GM12878 (cell line): ENCODE measurements at regions of chr9 and their contacts with region 1.

Region 1: GRCh38 chr9:10059044-10059443 is 553.8 kb downstream of the PTPRD start:
- DNase-seq: no peak
- ATAC-seq: no peak
- H3K4me3 ChIP-seq: no peak overlapping the region
- H3K27ac ChIP-seq: no peak overlapping the region
- H3K4me1 ChIP-seq: no peaks in the 10 kb centered on the region
- H3K27me3 ChIP-seq: no peaks in the 10 kb centered on the region
- CTCF ChIP-seq: no peak
- EP300 ChIP-seq: no peak
- POLR2A ChIP-seq: no peak
- RAD21 ChIP-seq: no peak

Region 2: GRCh38 chr9:10071579-10071978 is 12.5 kb after region 1 on chr9:
- CTCF ChIA-PET with region 1: interaction called, 15 read pairs
- POLR2A ChIA-PET with region 1: no interaction called
- RAD21 ChIA-PET with region 1: no interaction called
- SMC1A ChIA-PET with region 1: interaction called, 3 read pairs
- in situ Hi-C with region 1: no loop called
- intact Hi-C with region 1: no loop called
- DNase-seq: no peak
- ATAC-seq: no peak
- H3K4me3 ChIP-seq: no peak overlapping the region
- H3K27ac ChIP-seq: no peak overlapping the region
- H3K4me1 ChIP-seq: no peaks in the 10 kb centered on the region
- H3K27me3 ChIP-seq: no peaks in the 10 kb centered on the region
- CTCF ChIP-seq: no peak
- EP300 ChIP-seq: no peak
- POLR2A ChIP-seq: no peak
- RAD21 ChIP-seq: no peak

Region 3: DNA sequence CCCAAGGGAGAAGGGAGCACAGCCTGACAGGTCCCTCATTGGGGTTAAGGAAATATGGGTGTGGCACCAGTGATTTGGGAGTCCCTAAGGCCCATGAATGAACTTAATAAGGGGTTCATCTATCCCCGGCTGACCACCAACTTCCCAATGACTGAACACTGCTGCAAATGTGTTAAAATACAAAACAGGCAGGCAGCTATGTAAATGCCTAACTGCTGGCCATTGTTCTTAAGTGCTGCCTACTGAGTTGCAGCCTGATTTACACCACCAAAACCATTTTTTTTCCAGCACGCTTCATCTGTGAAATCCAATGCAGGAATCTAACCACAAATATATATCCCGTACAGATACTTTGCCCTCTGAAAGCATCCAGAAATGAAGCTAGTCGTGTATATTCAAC is 75.2 kb after region 1 on chr9:
- CTCF ChIA-PET with region 1: no interaction called
- POLR2A ChIA-PET with region 1: no interaction called
- RAD21 ChIA-PET with region 1: no interaction called
- SMC1A ChIA-PET with region 1: no interaction called
- in situ Hi-C with region 1: no loop called
- intact Hi-C with region 1: no loop called
- DNase-seq: no peak
- ATAC-seq: no peak
- H3K4me3 ChIP-seq: no peak overlapping the region
- H3K27ac ChIP-seq: no peak overlapping the region
- H3K4me1 ChIP-seq: no peaks in the 10 kb centered on the region
- H3K27me3 ChIP-seq: no peaks in the 10 kb centered on the region
- CTCF ChIP-seq: no peak
- EP300 ChIP-seq: no peak
- POLR2A ChIP-seq: no peak
- RAD21 ChIP-seq: no peak

Region 4: GRCh38 chr9:10148796-10149195 is 89.8 kb after region 1 on chr9:
- CTCF ChIA-PET with region 1: no interaction called
- POLR2A ChIA-PET with region 1: no interaction called
- RAD21 ChIA-PET with region 1: no interaction called
- SMC1A ChIA-PET with region 1: no interaction called
- in situ Hi-C with region 1: no loop called
- intact Hi-C with region 1: no loop called
- DNase-seq: no peak
- ATAC-seq: no peak
- H3K4me3 ChIP-seq: no peak overlapping the region
- H3K27ac ChIP-seq: no peak overlapping the region
- H3K4me1 ChIP-seq: no peaks in the 10 kb centered on the region
- H3K27me3 ChIP-seq: no peaks in the 10 kb centered on the region
- CTCF ChIP-seq: no peak
- EP300 ChIP-seq: no peak
- POLR2A ChIP-seq: no peak
- RAD21 ChIP-seq: no peak

Region 5: DNA sequence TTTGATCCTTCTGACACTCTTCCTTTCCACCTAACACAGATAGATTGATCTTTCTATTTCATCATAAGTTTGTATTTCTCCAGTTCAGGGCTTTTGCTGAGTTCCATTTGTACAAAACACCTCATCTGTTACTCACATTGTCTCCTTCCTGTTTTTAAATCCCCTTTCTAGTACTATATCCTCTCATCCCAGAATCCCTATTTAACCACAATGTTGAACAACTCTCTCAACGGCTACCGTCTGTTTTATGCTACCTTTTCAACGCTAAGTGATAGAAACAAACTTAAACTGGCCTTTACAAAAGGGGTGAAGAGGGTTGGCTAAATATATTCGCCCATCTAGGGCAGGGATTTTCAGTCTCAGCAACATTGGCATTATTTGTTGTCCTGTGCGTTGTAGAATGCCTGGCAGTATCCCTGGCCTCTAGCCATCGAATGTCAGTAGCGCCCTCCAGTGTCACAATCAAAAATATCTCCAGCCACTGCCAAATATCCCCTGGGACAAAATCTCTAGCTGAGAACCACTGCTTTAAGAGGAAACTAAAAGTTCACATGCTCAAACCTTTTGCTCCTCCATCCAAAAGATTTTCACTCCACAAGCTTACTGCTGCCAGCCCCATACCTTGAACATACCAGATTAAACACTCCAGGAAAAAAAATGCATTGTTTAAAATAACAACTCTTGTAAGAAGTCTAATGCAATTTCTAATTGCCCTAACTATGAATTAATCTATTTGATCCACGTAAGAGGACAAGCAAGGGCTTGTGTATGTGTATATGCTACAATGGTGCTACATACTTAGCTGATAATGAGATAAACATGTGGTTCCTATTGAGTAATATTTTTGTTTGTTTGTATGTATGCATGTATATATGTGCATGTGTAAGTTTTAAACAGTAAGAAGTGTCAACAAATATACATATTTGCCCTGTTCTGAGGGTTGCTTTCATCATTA is 209.8 kb after region 1 on chr9:
- CTCF ChIA-PET with region 1: interaction called, 30 read pairs
- POLR2A ChIA-PET with region 1: no interaction called
- RAD21 ChIA-PET with region 1: interaction called, 5 read pairs
- SMC1A ChIA-PET with region 1: interaction called, 9 read pairs
- in situ Hi-C with region 1: no loop called
- intact Hi-C with region 1: loop called (anchors 2 kb)
- DNase-seq: no peak
- ATAC-seq: peak; percentile 77
- H3K4me3 ChIP-seq: no peak overlapping the region
- H3K27ac ChIP-seq: no peak overlapping the region
- H3K4me1 ChIP-seq: no peaks in the 10 kb centered on the region
- H3K27me3 ChIP-seq: no peaks in the 10 kb centered on the region
- CTCF ChIP-seq: peak; percentile 20 to 57 (median 50); a peak in 3 of 6 replicates
- EP300 ChIP-seq: no peak
- POLR2A ChIP-seq: no peak
- RAD21 ChIP-seq: peak; percentile 34; the same call in 1 of the 2 replicates

Region 6: DNA sequence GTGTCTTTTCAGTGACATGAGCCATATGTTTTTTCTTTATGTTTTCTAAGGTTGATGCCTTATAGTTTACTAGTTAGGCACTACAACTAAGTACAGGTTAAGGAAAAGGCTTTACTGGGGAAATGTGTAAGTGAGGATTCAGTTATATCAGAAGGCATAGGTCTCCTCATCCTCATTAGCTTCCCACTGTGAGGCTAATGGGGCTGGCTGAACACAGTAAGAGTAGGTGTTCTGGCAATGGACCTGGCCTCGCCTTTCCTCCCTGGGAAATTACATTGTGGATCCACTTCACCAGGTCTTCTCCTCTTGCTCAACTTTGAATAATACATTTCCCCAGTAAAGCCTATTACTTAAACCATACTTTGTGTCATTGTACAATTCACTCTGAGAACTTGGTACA is 328.2 kb after region 1 on chr9:
- CTCF ChIA-PET with region 1: no interaction called
- POLR2A ChIA-PET with region 1: no interaction called
- RAD21 ChIA-PET with region 1: no interaction called
- SMC1A ChIA-PET with region 1: no interaction called
- in situ Hi-C with region 1: no loop called
- intact Hi-C with region 1: no loop called
- DNase-seq: no peak
- ATAC-seq: no peak
- H3K4me3 ChIP-seq: no peak overlapping the region
- H3K27ac ChIP-seq: no peak overlapping the region
- H3K4me1 ChIP-seq: no peaks in the 10 kb centered on the region
- H3K27me3 ChIP-seq: no peaks in the 10 kb centered on the region
- CTCF ChIP-seq: no peak
- EP300 ChIP-seq: no peak
- POLR2A ChIP-seq: no peak
- RAD21 ChIP-seq: no peak